Dendritic cell treated with granulocyte-macrophage colony-stimulating factor and Interleukin-4, amounts not matched to agents 40 ng/mL and 50 ng/mL, for 4 days (primary cell): ENCODE measurements at regions of chr12 and their contacts with region 1.

Region 1: DNA sequence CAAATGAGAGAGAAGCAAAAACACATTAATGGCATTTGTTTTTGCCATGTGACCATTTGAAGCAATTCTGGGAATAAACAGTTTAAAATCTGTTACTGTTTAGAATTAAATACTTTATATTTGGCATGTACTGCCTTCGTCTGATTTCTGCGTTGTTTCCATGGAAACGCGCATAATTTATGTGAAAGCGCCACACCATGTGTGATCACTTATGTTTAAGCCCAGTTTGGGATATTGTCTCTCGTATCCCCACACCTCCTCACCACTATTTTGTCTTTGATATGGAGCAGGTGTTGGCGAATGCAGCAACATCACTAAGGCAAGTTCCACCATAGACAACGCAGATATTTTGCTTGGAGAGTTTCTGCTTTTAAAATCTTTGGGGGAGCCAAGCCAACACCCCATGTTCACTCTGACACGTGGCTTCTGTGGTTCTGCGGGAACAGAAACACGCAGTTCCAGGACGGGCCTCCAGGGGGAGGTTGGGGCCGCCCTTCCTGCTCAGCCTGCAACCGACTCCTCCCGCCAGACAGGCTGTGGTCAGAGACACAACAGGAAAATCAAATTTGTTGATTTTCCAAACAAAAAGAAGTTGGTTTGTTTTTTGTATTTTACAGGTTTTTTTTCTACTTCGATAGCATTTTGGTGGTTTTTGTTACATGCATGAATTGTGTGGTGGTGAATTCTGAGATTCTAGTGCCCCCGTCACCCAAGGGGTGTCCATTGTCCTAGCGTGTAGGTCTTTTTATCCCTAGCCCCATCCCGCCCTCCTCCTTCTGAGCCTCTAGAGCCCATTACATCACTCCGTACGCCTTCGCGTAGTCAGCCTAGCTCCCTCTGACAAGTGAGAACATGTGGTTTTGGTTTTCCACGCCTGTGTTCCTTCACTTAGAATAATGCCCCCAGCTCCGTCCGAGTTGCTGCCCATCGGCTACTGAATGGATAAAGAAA is 101.9 kb upstream of the SFSWAP start:
- H3K4me3 Mint-ChIP-seq: no peak overlapping the region
- H3K27ac Mint-ChIP-seq: no peak overlapping the region
- H3K4me1 Mint-ChIP-seq: peaks cover 59% of the 10 kb centered on the region
- H3K27me3 Mint-ChIP-seq: peaks cover 7% of the 10 kb centered on the region

Region 2: DNA sequence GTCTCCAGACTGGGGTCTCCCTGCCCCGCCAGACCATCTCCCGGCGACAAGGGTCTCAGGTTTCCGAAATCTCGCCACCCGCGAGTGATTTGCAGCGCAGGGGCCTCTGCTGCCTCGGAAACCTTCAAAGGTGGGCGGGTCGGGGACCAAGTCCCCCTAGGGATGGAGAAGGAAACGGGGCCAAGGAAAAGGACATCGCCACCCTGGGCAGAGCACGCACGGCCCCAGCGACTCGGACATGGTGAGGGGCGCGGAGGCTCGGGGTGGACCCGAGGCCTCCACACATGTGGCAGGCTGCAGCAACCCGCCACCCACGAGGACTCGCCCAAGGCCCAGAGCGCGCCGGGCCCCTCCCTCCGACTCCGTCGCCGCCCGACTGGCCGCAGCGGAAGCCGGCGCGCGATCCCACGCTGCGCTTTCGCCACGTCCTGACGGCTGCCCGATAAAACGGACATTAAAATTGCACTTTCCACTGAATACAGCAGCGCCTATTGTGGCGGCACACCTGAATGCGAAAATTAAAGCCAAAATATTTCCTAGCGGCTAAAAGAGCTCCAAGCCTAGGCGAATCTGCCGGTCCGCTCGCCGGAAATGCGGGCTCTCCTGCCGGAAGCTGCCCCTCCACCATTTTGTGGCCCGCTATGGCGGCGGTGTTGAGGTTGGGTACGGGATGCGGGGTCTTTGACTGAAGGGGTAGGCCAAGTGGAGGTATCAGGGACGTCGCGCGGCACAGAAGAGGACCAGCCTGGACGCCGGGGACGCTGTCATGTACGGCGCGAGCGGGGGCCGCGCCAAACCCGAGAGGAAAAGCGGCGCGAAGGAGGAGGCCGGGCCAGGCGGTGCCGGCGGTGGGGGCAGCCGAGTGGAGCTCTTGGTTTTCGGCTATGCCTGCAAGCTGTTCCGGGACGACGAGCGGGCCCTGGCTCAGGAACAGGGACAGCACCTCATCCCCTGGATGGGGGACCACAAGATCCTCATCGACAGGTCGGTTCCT is 101.7 kb after region 1 on chr12 and contains the start of gene SFSWAP:
- intact Hi-C with region 1: loop called (anchors 5 kb)
- H3K4me3 Mint-ChIP-seq: peak within 1 kb of the TSS; percentile 98
- H3K27ac Mint-ChIP-seq: peak within 1 kb of the TSS; percentile 100
- H3K4me1 Mint-ChIP-seq: peaks cover 10% of the 10 kb centered on the region
- H3K27me3 Mint-ChIP-seq: peaks cover 2% of the 10 kb centered on the region